Naive thymus-derived CD4-positive, alpha-beta T cell (primary cell): ENCODE measurements at regions of chr20 and their contacts with region 1.

Region 1: DNA sequence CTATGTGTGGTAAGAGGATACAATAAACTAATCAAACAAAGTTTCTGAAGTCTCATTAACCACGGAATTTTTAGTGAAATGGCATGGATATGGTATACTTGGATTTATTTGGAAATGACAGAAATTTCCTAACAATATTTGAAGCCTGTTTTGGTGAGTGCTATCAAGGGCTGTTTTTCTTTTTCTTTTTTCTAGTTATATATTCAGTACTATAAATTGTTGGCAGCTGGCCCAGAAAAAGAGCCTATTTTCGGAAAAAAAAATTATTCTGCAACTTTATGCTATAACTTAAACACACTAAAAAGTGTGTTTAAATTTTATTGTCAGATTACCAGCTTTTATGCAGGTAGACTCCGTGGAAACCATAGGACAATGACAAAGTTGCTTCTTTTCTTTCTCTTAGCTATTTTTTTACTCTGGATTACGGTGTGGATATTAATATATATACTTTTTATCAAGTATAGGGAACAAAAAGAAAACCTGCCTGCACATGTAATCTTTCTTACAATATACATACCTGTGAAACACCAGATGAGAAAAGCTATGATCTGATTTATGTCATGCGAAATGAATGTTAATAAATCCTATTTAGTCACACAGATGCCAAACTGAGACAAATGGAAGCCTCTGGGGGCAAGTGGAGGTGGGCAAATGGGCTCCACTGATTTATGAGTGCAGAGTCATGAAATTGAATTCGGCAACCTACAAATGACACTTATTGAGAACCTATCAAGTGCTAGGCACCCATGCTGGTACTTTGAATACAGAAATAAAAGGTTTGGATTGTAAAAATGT is 919.5 kb upstream of the FLRT3 start:
- DNase-seq: no peak
- ATAC-seq: no peak
- H3K4me3 ChIP-seq: no peak overlapping the region
- H3K4me3 Mint-ChIP-seq: no peak overlapping the region
- H3K27ac ChIP-seq: no peak overlapping the region
- H3K27ac Mint-ChIP-seq: no peak overlapping the region
- H3K4me1 ChIP-seq: no peaks in the 10 kb centered on the region
- H3K4me1 Mint-ChIP-seq: no peaks in the 10 kb centered on the region
- H3K27me3 ChIP-seq: no peaks in the 10 kb centered on the region
- H3K27me3 Mint-ChIP-seq: no peaks in the 10 kb centered on the region

Region 2: DNA sequence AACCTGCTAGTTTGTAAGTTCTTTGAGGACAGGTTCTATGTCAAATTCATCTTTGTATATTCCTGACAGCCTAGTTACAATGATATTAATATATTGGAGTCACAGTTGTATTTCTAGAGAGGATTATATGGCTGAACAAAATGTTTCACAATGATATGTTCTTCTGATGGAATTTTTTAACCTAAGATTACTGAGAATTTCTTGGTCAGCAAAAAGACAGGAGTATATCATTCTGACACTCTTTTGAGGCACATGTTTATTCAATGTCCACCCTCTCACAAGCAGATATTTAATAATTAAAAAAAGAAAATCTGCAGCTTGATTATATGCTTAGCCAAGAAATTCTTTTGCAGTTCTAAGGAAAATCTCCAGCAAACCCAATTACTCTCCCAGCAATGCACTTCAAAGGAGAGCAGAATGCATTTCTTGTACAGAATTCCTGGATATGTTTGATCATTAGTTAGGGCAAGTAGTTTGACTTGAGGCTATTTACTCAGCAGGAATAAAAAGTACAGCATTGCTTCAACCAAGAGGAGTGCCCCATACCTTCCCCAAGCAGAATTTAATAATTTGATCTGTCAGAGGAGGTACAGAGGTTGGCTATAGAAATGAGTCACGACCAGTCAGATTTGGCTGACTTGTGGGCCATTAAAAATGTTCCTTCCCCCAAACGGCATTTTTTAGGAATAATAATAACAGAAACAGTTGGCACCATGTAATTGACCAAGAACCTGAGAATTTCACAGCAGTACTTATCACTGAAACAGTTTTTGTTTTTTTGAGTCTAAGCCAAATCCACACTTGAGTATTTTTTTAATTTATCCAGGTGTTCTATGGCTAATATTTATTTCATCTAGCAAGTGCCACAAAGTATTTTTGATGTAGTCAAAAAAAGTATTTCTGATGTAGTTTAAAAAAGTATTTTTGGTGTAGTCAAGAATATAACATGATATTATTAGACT is 411.4 kb before region 1 on chr20:
- CTCF ChIA-PET with region 1: no interaction called
- POLR2A ChIA-PET with region 1: no interaction called
- intact Hi-C with region 1: no loop called
- DNase-seq: no peak
- ATAC-seq: no peak
- H3K4me3 ChIP-seq: no peak overlapping the region
- H3K4me3 Mint-ChIP-seq: no peak overlapping the region
- H3K27ac ChIP-seq: no peak overlapping the region
- H3K27ac Mint-ChIP-seq: no peak overlapping the region
- H3K4me1 ChIP-seq: no peaks in the 10 kb centered on the region
- H3K4me1 Mint-ChIP-seq: no peaks in the 10 kb centered on the region
- H3K27me3 ChIP-seq: no peaks in the 10 kb centered on the region
- H3K27me3 Mint-ChIP-seq: peaks cover 0 to 2% (median 0%) of the 10 kb centered on the region in 5 donors

Region 3: DNA sequence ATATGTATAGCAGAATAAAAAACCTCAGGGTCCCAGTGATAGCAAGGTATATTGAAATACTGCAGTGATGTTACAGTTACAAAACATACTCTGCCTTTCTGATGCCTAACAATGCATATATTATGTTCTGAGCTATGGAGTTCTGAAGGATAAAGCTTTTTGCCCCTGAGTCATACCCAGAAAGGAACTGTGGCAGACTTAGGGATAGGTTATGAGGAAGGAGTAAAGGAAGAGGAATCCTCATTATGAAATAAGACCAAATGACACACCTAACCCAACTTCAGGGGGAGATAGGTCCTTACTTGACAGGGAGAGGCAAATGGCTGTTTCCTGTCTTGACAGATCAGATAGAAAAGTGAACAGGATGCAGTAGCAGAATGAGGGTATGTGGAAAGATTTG is 21.2 kb after region 1 on chr20:
- CTCF ChIA-PET with region 1: no interaction called
- POLR2A ChIA-PET with region 1: no interaction called
- intact Hi-C with region 1: no loop called
- DNase-seq: no peak
- ATAC-seq: no peak
- H3K4me3 ChIP-seq: no peak overlapping the region
- H3K4me3 Mint-ChIP-seq: no peak overlapping the region
- H3K27ac ChIP-seq: no peak overlapping the region
- H3K27ac Mint-ChIP-seq: no peak overlapping the region
- H3K4me1 ChIP-seq: no peaks in the 10 kb centered on the region
- H3K4me1 Mint-ChIP-seq: no peaks in the 10 kb centered on the region
- H3K27me3 ChIP-seq: no peaks in the 10 kb centered on the region
- H3K27me3 Mint-ChIP-seq: no peaks in the 10 kb centered on the region

Region 4: GRCh38 chr20:15317546-15318232 is 60.8 kb after region 1 on chr20:
- CTCF ChIA-PET with region 1: no interaction called
- POLR2A ChIA-PET with region 1: no interaction called
- intact Hi-C with region 1: loop called in 1 of 2 experiments (anchors 10 kb)
- DNase-seq: no peak
- ATAC-seq: no peak
- H3K4me3 ChIP-seq: no peak overlapping the region
- H3K4me3 Mint-ChIP-seq: no peak overlapping the region
- H3K27ac ChIP-seq: no peak overlapping the region
- H3K27ac Mint-ChIP-seq: no peak overlapping the region
- H3K4me1 ChIP-seq: no peaks in the 10 kb centered on the region
- H3K4me1 Mint-ChIP-seq: no peaks in the 10 kb centered on the region
- H3K27me3 ChIP-seq: no peaks in the 10 kb centered on the region
- H3K27me3 Mint-ChIP-seq: no peaks in the 10 kb centered on the region